Colonic mucosa (tissue), 4 donors: ENCODE measurements at regions of chr11 and their contacts with region 1.

Region 1: GRCh38 chr11:119666463-119667131 is 62.4 kb downstream of the NECTIN1 start:
- DNase-seq: peak; percentile 81
- H3K4me3 ChIP-seq: no peak overlapping the region
- H3K27ac ChIP-seq: no peak overlapping the region
- H3K4me1 ChIP-seq: no peaks in the 10 kb centered on the region
- H3K27me3 ChIP-seq: no peaks in the 10 kb centered on the region
- CTCF ChIP-seq: peak; percentile 90

Region 2: DNA sequence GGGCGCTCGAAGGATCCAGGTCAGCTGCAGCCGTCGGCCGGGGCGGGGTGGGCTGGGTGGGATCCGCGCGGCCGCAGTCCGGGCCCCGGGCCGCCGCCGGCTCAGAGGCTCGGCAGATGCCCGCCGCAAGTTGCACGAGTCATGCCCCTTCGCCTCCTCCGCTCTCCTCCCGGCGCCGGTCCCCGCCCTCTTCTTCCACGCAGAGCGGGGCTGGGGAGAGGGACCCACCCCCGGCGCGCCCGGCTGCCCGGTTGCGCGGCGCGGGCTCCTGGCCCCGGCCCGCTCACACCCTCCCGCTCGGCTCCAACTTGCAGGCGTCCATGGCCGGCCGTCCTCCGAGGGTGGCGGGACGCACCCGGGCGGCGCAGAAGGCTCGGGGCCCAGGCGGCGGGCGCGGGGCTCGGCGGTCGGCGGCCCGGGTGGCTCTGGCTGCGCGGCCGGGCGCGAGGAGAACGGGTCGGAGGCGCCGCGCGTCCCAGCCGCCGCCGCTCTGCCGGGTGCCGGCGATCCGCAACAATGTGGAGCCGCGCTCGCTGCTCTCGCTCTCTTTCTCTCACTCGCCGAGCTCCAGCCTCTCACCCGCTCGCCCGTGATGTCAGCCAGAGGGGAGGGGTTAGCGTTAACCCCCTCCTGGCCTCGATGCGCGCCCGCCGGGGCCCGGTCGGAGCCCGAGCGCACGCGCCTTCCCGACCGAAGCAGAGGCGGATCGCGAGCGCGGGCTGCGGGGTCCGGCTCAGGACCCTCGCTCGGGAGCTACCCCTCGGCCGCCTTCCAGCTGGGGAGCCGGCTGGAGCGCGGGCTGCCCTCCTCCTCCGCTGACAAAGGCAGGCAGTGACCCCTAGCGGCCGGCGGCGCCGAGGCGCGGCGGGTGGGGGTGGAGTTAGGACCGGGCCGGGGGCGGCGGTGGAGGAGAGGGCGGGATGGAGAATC is 62.3 kb after region 1 on chr11 and contains the start of gene NECTIN1:
- intact Hi-C with region 1: loop called (anchors 2 kb)
- DNase-seq: peak; percentile 94
- H3K4me3 ChIP-seq: peak within 1 kb of the TSS; percentile 65
- H3K27ac ChIP-seq: peak within 1 kb of the TSS; percentile 78
- H3K4me1 ChIP-seq: peaks cover 10% of the 10 kb centered on the region
- H3K27me3 ChIP-seq: no peaks in the 10 kb centered on the region
- CTCF ChIP-seq: peak; percentile 92
- total RNA-seq, gene NECTIN1: 53.0 to 59.9 TPM

Region 3: GRCh38 chr11:120013325-120014270 is 347.0 kb after region 1 on chr11:
- intact Hi-C with region 1: loop called (anchors 10 kb)
- DNase-seq: peak; percentile 63
- H3K4me3 ChIP-seq: no peak overlapping the region
- H3K27ac ChIP-seq: no peak overlapping the region
- H3K4me1 ChIP-seq: no peaks in the 10 kb centered on the region
- H3K27me3 ChIP-seq: no peaks in the 10 kb centered on the region
- CTCF ChIP-seq: peak; percentile 66